MCF 10A (cell line): ENCODE measurements at regions of chr5 and their contacts with region 1.

Region 1: GRCh38 chr5:176447982-176448608 is at the start of gene FAF2:
- DNase-seq: peak; percentile 100
- H3K4me3 Mint-ChIP-seq: peak within 1 kb of the TSS; percentile 92
- H3K27ac Mint-ChIP-seq: peak within 1 kb of the TSS; percentile 100
- H3K4me1 Mint-ChIP-seq: peaks cover 24% of the 10 kb centered on the region
- H3K27me3 Mint-ChIP-seq: no peaks in the 10 kb centered on the region
- CTCF ChIP-seq: peak; percentile 99
- total RNA-seq, gene FAF2: 78.3 and 97.2 TPM in 2 replicates

Region 2: GRCh38 chr5:175597718-175598117 is 850.4 kb before region 1 on chr5:
- CTCF ChIA-PET with region 1: no interaction called
- POLR2A ChIA-PET with region 1: no interaction called
- intact Hi-C with region 1: no loop called
- DNase-seq: no peak
- H3K4me3 Mint-ChIP-seq: no peak overlapping the region
- H3K27ac Mint-ChIP-seq: no peak overlapping the region
- H3K4me1 Mint-ChIP-seq: no peaks in the 10 kb centered on the region
- H3K27me3 Mint-ChIP-seq: peaks cover 12% of the 10 kb centered on the region
- CTCF ChIP-seq: no peak

Region 3: GRCh38 chr5:176388444-176389134 is 59.5 kb before region 1 on chr5 and contains the starts of genes HIGD2A and NOP16:
- CTCF ChIA-PET with region 1: interaction called, 4 read pairs
- POLR2A ChIA-PET with region 1: interaction called, 16 read pairs
- intact Hi-C with region 1: no loop called
- DNase-seq: peak; percentile 100
- H3K4me3 Mint-ChIP-seq: peak within 1 kb of the TSS; percentile 98
- H3K27ac Mint-ChIP-seq: peak within 1 kb of the TSS; percentile 99
- H3K4me1 Mint-ChIP-seq: peaks cover 22% of the 10 kb centered on the region
- H3K27me3 Mint-ChIP-seq: no peaks in the 10 kb centered on the region
- CTCF ChIP-seq: no peak
- total RNA-seq, gene HIGD2A: 167 and 196 TPM in 2 replicates
- total RNA-seq, gene NOP16: 90.9 and 134 TPM in 2 replicates

Region 4: GRCh38 chr5:176415952-176416924 is 31.9 kb before region 1 on chr5 and contains the start of gene CLTB:
- CTCF ChIA-PET with region 1: interaction called, 83 read pairs
- POLR2A ChIA-PET with region 1: interaction called, 101 read pairs
- intact Hi-C with region 1: loop called (anchors 1 kb)
- DNase-seq: peak; percentile 91
- H3K4me3 Mint-ChIP-seq: peak within 1 kb of the TSS; percentile 83
- H3K27ac Mint-ChIP-seq: peak within 1 kb of the TSS; percentile 73
- H3K4me1 Mint-ChIP-seq: peaks cover 51% of the 10 kb centered on the region
- H3K27me3 Mint-ChIP-seq: no peaks in the 10 kb centered on the region
- CTCF ChIP-seq: peak; percentile 90
- total RNA-seq, gene CLTB: 333 and 339 TPM in 2 replicates

Region 5: DNA sequence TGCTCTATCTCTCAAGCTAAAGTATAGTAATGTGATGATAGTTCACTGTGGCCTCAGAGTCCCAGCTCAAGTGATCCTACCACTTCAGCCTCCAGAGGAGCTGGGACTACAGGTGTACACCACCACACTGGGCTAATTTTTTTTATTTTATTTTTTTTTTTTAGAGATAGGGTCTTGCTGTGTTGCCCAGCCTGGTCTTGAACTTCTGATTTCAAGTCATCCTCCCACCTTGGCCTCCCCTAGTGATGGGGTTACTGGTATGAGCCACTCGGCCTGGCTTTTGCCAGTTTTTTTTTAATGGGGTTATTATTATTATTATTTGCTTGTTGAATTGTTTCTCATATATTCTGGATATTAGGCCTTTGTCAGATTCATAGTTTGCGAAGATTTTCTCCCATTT is 13.3 kb after region 1 on chr5:
- CTCF ChIA-PET with region 1: interaction called, 12 read pairs
- POLR2A ChIA-PET with region 1: interaction called, 149 read pairs
- intact Hi-C with region 1: no loop called
- DNase-seq: no peak
- H3K4me3 Mint-ChIP-seq: no peak overlapping the region
- H3K27ac Mint-ChIP-seq: no peak overlapping the region
- H3K4me1 Mint-ChIP-seq: peaks cover 34% of the 10 kb centered on the region
- H3K27me3 Mint-ChIP-seq: no peaks in the 10 kb centered on the region
- CTCF ChIP-seq: no peak

Region 6: DNA sequence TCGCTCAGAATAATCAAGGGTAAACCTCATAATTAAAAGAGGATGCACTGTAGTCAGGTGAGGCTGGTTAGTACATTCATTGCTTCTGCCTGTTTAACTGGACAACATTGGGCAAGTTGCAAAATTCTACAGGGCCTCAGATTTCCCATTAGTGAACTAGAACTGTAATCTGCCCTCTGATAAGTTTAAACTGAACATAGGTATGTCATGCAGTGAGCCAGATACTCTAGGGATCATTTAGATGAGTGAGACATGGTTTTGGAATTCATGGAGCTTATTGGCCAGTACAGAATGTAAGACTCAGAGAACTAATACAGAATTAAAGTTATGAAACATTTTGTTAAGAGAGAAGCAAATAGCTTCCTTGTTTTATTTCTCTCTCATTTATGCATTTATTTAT is 53.2 kb after region 1 on chr5:
- CTCF ChIA-PET with region 1: interaction called, 12 read pairs
- POLR2A ChIA-PET with region 1: interaction called, 11 read pairs
- intact Hi-C with region 1: no loop called
- DNase-seq: no peak
- H3K4me3 Mint-ChIP-seq: no peak overlapping the region
- H3K27ac Mint-ChIP-seq: no peak overlapping the region
- H3K4me1 Mint-ChIP-seq: peaks cover 6% of the 10 kb centered on the region
- H3K27me3 Mint-ChIP-seq: no peaks in the 10 kb centered on the region
- CTCF ChIP-seq: no peak

Region 7: GRCh38 chr5:176647030-176647866 is 199.2 kb after region 1 on chr5 and contains the start of gene TSPAN17:
- CTCF ChIA-PET with region 1: no interaction called
- POLR2A ChIA-PET with region 1: interaction called, 12 read pairs
- intact Hi-C with region 1: no loop called
- DNase-seq: peak; percentile 100
- H3K4me3 Mint-ChIP-seq: peak within 1 kb of the TSS; percentile 80
- H3K27ac Mint-ChIP-seq: peak within 1 kb of the TSS; percentile 76
- H3K4me1 Mint-ChIP-seq: peaks cover 21% of the 10 kb centered on the region
- H3K27me3 Mint-ChIP-seq: no peaks in the 10 kb centered on the region
- CTCF ChIP-seq: peak; percentile 49
- total RNA-seq, gene TSPAN17: 36.7 and 47.5 TPM in 2 replicates

Region 8: DNA sequence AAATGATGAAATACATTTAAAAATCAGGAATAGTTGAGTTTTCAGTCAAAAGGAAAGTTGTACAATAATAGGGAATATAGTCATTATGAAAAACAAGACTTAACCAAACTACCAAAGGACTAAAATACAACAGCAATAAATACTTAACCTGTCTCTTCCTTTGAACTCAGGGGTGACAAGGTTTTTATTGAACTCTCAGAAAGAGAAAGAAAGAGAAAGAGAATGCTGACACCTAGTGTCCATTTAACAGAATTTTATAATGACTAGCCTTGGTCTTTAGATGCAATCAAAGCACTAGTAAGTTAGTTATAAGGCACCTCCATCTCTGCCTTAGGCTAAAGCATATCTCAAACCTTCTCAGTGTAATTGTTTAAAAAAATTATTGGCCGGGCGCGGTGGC is 511.0 kb after region 1 on chr5:
- CTCF ChIA-PET with region 1: no interaction called
- POLR2A ChIA-PET with region 1: no interaction called
- intact Hi-C with region 1: no loop called
- DNase-seq: peak; percentile 45
- H3K4me3 Mint-ChIP-seq: no peak overlapping the region
- H3K27ac Mint-ChIP-seq: no peak overlapping the region
- H3K4me1 Mint-ChIP-seq: peaks cover 23% of the 10 kb centered on the region
- H3K27me3 Mint-ChIP-seq: no peaks in the 10 kb centered on the region
- CTCF ChIP-seq: peak; percentile 45